ENCODE measurements at regions of chr15 and their contacts with region 1.

Region 1: DNA sequence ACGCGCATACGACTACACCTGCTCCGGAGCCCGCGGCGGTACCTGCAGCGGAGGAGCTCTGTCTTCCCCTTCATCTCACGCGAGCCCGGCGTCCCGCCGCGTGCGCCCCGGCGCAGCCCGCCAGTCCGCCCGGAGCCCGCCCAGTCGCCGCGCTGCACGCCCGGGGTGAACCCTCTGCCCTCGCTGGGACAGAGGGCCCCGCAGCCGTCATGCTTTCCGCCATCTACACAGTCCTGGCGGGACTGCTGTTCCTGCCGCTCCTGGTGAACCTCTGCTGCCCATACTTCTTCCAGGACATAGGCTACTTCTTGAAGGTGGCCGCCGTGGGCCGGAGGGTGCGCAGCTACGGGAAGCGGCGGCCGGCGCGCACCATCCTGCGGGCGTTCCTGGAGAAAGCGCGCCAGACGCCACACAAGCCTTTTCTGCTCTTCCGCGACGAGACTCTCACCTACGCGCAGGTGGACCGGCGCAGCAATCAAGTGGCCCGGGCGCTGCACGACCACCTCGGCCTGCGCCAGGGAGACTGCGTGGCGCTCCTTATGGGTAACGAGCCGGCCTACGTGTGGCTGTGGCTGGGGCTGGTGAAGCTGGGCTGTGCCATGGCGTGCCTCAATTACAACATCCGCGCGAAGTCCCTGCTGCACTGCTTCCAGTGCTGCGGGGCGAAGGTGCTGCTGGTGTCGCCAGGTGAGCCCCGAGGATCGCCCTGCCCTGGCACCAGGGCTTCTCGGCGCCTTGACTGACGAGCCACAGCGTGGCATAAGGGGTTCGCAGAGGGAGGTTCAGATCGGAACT is 420 bp downstream of the SLC27A2 start:
- DNase-seq: peak; percentile 34 to 43
- H3K4me3 ChIP-seq: peak overlapping the region; percentile 93
- H3K27ac ChIP-seq: peak overlapping the region; percentile 2; the same call in 1 of the 2 replicates
- H3K4me1 ChIP-seq: peaks cover 9% of the 10 kb centered on the region
- H3K27me3 ChIP-seq: no peaks in the 10 kb centered on the region
- CTCF ChIP-seq: 0 out of 2 replicates have a peak, but pooled peaks have one; percentile 4

Region 2: GRCh38 chr15:50315814-50316630 is 133.6 kb after region 1 on chr15:
- CTCF ChIA-PET with region 1: interaction called, 3 read pairs
- POLR2A ChIA-PET with region 1: no interaction called
- intact Hi-C with region 1: loop called (anchors 1 kb)
- DNase-seq: peak in 1 of 2 experiments; percentile 52
- H3K4me3 ChIP-seq: no peak overlapping the region
- H3K27ac ChIP-seq: no peak overlapping the region
- H3K4me1 ChIP-seq: 0 out of 2 replicates have a peak, but pooled peaks cover 9% of the 10 kb centered on the region
- H3K27me3 ChIP-seq: no peaks in the 10 kb centered on the region
- CTCF ChIP-seq: peak; percentile 82

Measured in PC-9 (cell line).